Calu3 (cell line): ENCODE measurements at regions of chr1 and their contacts with region 1.

Region 1: GRCh38 chr1:245858722-245859492 is 648.2 kb downstream of the SMYD3 start:
- DNase-seq: no peak
- H3K4me3 Mint-ChIP-seq: no peak overlapping the region
- H3K27ac Mint-ChIP-seq: no peak overlapping the region
- H3K4me1 Mint-ChIP-seq: peaks cover 46% of the 10 kb centered on the region
- H3K27me3 Mint-ChIP-seq: no peaks in the 10 kb centered on the region
- CTCF ChIP-seq: no peak

Region 2: GRCh38 chr1:245715970-245716369 is 142.9 kb before region 1 on chr1:
- CTCF ChIA-PET with region 1: no interaction called
- intact Hi-C with region 1: loop called (anchors 5 kb)
- DNase-seq: peak; percentile 14
- H3K4me3 Mint-ChIP-seq: no peak overlapping the region
- H3K27ac Mint-ChIP-seq: no peak overlapping the region
- H3K4me1 Mint-ChIP-seq: no peaks in the 10 kb centered on the region
- H3K27me3 Mint-ChIP-seq: no peaks in the 10 kb centered on the region
- CTCF ChIP-seq: no peak

Region 3: GRCh38 chr1:245837718-245838117 is 21.2 kb before region 1 on chr1:
- CTCF ChIA-PET with region 1: no interaction called
- intact Hi-C with region 1: no loop called
- DNase-seq: peak; percentile 19
- H3K4me3 Mint-ChIP-seq: no peak overlapping the region
- H3K27ac Mint-ChIP-seq: peak overlapping the region; percentile 30
- H3K4me1 Mint-ChIP-seq: peaks cover 17% of the 10 kb centered on the region
- H3K27me3 Mint-ChIP-seq: no peaks in the 10 kb centered on the region
- CTCF ChIP-seq: no peak